ENCODE measurements at regions of chr17 and their contacts with region 1.

Region 1: DNA sequence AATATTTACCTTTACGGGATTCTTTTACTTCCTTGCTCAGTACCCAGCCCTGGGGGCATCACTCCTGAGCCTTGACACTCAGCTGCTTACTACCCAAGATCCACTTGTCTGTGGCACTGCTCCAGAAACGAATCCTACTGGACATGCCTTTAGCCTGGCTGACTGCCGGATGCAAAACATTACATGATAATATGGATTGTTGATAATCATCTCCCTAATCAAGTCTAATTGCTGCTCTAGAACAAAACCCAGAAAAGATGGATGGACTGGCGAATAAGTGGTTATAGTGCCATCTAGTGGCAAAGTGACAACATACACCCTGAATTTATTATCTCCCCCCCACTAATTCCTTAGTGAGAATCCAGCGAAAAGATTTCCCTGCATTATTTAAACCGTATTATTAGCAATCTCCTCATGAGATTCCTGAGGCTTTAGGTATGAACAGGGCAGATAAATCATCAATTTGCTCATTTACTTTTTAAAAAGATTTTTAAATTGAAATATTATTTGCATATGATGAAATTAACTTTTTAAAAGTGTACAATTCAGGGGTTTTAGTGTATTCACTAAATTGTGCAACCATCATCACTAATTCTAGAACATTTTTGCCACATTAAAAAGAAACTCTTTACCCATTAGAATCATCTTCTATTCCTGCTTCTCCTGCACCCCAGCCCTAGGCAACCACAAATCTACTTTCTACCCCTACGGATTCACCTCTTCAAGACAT is 61.6 kb downstream of the RGS9 start:
- H3K4me3 ChIP-seq: no peak overlapping the region
- H3K27ac ChIP-seq: no peak overlapping the region
- H3K4me1 ChIP-seq: no peaks in the 10 kb centered on the region
- CTCF ChIP-seq: peak; percentile 36; the same call in 1 of the 2 replicates

Region 2: DNA sequence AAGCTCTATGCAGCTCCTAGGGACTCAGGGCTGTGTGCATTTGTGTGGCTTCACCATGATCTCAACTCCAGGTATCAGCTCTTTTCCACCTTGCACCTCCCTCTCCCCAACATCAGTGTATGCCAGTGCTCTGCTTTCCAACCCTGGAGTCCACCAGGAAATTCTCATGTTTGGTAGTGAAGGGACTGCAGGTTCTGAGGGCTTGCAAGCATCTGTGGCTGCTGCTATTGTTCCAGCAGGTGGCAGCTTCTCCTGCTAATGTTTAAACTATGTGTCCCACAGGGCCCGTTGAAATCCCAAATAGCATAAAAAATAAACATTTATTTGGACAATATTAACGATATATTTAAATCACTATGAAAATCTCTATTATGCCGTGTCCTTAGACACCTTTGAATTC is 20.3 kb after region 1 on chr17:
- CTCF ChIA-PET with region 1: interaction called, 10 read pairs
- POLR2A ChIA-PET with region 1: no interaction called
- H3K4me3 ChIP-seq: no peak overlapping the region
- H3K27ac ChIP-seq: no peak overlapping the region
- H3K4me1 ChIP-seq: no peaks in the 10 kb centered on the region
- CTCF ChIP-seq: no peak

Region 3: DNA sequence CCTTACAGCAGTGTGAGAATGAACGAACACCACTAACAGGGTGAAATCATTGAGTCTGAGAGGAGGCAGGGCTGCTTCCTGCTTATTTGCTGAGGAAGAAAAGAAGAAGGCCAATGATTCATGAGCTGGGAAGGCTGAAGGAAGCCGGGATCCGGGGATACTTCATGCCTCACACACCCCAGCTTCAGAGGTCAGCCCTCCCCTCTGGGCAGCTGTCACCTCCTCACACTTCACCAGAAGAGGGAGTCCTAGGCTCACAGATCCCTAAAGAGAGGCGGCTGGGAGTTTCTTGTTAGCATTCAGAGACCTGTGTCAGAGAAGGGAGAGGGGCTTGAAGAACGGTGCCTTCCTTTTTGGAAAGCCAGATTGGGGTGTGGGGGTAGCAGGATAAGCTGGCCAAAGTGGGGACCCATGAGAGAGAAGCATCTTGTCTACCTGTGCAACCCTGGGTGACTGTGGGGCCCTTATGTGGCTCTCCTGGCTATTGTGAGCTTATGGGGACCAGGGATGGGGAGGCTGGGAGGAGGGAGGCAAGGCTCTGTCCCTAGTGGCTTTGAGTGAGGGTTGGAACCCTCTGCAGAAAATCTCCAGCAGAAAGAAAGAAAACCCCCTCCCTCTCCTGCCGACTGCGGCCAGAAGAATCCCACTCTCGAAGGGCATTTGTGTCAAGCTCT is 33.0 kb after region 1 on chr17:
- CTCF ChIA-PET with region 1: no interaction called
- POLR2A ChIA-PET with region 1: no interaction called
- H3K4me3 ChIP-seq: no peak overlapping the region
- H3K27ac ChIP-seq: no peak overlapping the region
- H3K4me1 ChIP-seq: peaks cover 2% of the 10 kb centered on the region; the same call in 1 of the 2 replicates
- CTCF ChIP-seq: peak; percentile 78

Region 4: GRCh38 chr17:65455154-65455971 is 256.5 kb after region 1 on chr17:
- CTCF ChIA-PET with region 1: no interaction called
- POLR2A ChIA-PET with region 1: no interaction called
- H3K4me3 ChIP-seq: no peak overlapping the region
- H3K27ac ChIP-seq: no peak overlapping the region
- H3K4me1 ChIP-seq: no peaks in the 10 kb centered on the region
- CTCF ChIP-seq: no peak